ENCODE measurements at regions of chr1 and their contacts with region 1.

Region 1: DNA sequence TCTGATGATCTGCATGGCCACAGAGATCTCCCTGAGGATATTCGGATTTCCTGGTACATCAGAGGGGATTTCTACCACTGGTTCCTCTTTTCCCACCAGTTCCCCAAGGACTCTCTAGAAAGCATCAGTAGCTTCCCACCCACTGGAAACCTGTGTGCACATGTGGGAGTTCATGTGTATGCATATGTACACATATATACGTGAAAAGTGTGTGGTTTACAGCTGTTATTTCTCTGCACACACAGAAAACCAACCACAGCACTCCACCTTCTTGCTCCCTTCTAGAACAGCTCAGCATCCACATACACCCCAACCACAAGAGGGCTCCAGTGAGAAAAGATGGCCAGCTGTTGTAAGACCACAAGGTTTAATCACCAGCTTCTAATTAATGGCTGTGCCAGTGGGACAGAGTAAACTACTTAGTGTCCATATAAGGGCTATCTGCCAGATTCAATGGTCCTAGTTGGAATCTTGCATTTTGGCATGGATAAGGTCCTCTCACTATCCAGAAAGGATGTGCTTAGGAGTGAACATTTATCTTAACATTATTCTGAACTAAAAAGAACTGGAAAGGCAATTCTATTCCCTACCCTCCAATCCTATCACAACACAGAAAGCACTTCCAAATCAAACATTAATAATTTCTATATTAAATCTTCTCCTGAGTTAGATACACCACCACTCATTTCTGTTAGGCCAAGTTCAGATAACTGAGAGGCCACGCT is 24.1 kb downstream of the GPR3 start:
- DNase-seq: peak in 1 of 2 experiments; percentile 52
- ATAC-seq: peak; percentile 62 to 82; a peak in 4 of 6 replicates
- H3K4me3 ChIP-seq: no peak overlapping the region
- H3K27ac ChIP-seq: no peak overlapping the region
- H3K4me1 ChIP-seq: peaks cover 17% of the 10 kb centered on the region
- CTCF ChIP-seq: peak; percentile 60
- EP300 ChIP-seq: no peak
- POLR2A ChIP-seq: no peak
- RAD21 ChIP-seq: peak; percentile 48 to 56

Region 2: DNA sequence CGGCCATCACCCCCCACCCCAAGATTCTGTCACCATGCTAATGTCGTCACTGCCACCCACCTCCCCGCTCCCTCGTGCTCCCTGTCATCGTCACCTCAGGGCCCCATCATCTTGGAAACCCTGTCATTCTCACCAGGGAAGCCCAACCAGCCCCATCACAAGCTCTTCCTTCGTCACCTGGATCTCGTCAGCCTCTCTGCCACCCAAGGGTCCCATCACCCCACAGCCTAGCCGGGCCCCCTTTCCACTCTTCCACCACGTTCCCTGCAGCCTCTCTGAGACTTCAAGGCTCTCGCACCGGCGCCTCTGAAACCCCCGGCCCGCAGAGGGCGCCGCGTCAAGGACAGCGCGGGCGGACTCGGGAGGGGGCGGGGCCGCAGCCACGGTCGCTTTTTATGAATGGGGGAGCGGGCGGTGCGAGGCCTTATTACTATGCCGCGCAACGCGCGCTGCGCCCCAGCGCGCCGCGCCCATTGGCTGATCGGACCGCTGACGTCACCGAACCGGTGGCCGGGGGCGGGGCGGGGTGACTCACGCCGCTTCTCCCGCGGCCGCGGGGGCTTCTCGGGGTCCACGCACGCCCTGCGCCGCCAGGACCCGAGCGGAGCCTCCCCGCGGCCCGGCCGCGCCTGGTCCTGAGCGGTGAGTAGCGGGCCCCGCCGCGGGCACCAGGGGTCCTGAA is 24.3 kb before region 1 on chr1 and contains the start of gene GPR3:
- CTCF ChIA-PET with region 1: interaction called, 29 read pairs
- POLR2A ChIA-PET with region 1: no interaction called
- DNase-seq: peak; percentile 81 to 88
- ATAC-seq: peak; percentile 74 to 85
- H3K4me3 ChIP-seq: peak within 1 kb of the TSS; percentile 70
- H3K27ac ChIP-seq: peak within 1 kb of the TSS; percentile 74 to 89
- H3K4me1 ChIP-seq: peaks cover 17% of the 10 kb centered on the region
- CTCF ChIP-seq: peak; percentile 50
- EP300 ChIP-seq: no peak
- POLR2A ChIP-seq: no peak
- RAD21 ChIP-seq: peak; percentile 12 to 33; a peak in 2 of 5 replicates
- polyA plus RNA-seq, gene GPR3: 1.3 and 1.7 TPM in 2 replicates

Region 3: GRCh38 chr1:27402349-27402754 is 14.2 kb before region 1 on chr1:
- CTCF ChIA-PET with region 1: interaction called, 29 read pairs
- POLR2A ChIA-PET with region 1: no interaction called
- DNase-seq: peak in 1 of 2 experiments; percentile 54
- ATAC-seq: peak; percentile 43 to 63; a peak in 4 of 6 replicates
- H3K4me3 ChIP-seq: no peak overlapping the region
- H3K27ac ChIP-seq: no peak overlapping the region
- H3K4me1 ChIP-seq: peaks cover 10% of the 10 kb centered on the region; the same call in 1 of the 3 replicates
- CTCF ChIP-seq: 0 out of 3 replicates have a peak, but pooled peaks have one; percentile 14
- EP300 ChIP-seq: no peak
- POLR2A ChIP-seq: no peak
- RAD21 ChIP-seq: peak; percentile 11 to 50; a peak in 1 of 5 replicates

Region 4: DNA sequence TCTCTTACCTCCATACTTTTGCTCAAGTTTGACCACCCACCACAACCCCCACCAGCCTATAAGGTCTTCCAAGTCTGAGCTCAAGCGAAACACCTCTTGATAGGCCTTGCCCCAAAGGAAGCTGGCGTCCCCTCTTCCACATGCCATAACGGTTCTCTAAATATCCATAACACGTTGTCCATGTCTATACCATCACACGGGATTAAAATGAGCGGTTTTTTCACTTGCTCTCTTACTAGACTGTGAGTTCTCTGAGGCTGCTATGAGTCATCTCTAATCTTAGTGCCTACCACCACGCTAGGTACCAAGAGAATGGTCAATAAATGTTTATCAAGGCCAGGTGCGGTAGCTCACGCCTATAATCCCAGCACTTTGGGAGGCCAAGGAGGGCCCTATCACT is 32.4 kb after region 1 on chr1:
- CTCF ChIA-PET with region 1: no interaction called
- POLR2A ChIA-PET with region 1: no interaction called
- DNase-seq: no peak
- ATAC-seq: no peak
- H3K4me3 ChIP-seq: no peak overlapping the region
- H3K27ac ChIP-seq: no peak overlapping the region
- H3K4me1 ChIP-seq: no peaks in the 10 kb centered on the region
- CTCF ChIP-seq: no peak
- EP300 ChIP-seq: no peak
- POLR2A ChIP-seq: no peak
- RAD21 ChIP-seq: no peak